HepG2 (cell line): ENCODE measurements at regions of chr17 and their contacts with region 1.

Region 1: DNA sequence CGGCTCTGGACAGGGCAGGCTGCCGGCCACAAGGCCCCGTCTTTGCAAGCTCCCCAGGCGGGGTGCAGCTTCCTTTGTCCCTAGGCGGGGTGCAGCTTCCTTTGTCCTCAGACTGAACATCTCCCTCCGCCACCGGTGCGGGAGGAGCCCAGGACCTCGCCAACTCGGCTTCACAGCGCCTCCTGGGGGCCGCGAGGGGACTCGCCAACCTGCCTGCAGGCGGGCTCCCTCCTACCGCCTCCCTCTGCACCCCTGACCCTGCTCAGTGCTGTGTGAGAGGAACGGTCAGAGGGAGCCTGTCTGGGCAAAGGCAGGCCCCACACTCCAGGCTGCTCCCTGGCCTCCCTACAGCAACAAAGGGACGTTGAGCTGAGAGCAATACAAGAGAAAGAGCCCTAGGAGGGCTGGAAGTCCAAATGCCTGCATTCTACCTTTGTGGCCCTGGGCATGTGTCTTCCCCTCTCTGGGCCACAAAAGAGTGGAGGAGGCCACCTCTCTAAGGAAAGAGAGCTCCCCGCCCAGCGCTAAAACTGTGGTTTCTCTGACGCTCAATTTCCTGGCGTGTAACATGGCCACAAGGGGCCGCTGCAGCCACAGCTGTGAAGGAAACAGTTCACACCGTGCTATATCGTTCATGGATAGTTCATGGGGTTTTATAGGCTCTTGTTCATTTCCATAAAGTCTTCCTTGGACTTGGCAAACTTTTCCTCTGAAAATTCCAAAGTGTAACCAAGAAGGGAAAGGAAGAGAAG is 20.9 kb upstream of the KRT19 start:
- DNase-seq: peak; percentile 82
- ATAC-seq: peak; percentile 90
- H3K4me3 ChIP-seq: peak overlapping the region; percentile 18 to 67 (median 22); a peak in 4 of 6 replicates
- H3K27ac ChIP-seq: peak overlapping the region; percentile 16
- H3K4me1 ChIP-seq: peaks cover 48% of the 10 kb centered on the region
- H3K27me3 ChIP-seq: peaks cover 4 to 28% of the 10 kb centered on the region in 2 experiments; a peak in 4 of 5 replicates
- CTCF ChIP-seq: peak; percentile 89
- EP300 ChIP-seq: no peak
- POLR2A ChIP-seq: no peak
- RAD21 ChIP-seq: peak; percentile 91

Region 2: DNA sequence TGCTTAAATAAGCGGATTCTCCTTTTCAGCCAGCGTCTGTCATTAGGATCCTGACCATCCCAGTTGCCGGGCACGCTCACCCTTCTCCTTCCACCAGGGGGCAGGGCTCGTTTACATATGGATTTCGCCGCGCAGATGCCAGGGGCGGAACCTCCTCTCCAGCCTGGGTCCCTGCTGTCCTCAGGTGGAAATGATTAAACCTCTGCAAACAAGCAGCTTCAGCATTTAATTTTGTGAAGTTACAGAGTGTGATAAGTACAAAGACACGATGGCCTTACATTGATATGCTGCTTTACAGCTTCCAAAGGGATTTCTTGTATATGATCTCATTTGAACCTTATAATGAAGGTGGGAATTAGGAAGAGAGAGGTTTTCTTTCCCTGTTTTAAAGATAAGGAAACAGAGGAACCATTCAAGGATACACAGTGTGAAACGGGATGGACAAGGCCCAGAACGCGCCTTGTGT is 745.4 kb before region 1 on chr17:
- CTCF ChIA-PET with region 1: interaction called, 21 read pairs
- POLR2A ChIA-PET with region 1: no interaction called
- in situ Hi-C with region 1: no loop called
- intact Hi-C with region 1: no loop called
- DNase-seq: peak; percentile 77
- ATAC-seq: peak; percentile 99
- H3K4me3 ChIP-seq: no peak overlapping the region
- H3K27ac ChIP-seq: no peak overlapping the region
- H3K4me1 ChIP-seq: peaks cover 6% of the 10 kb centered on the region
- H3K27me3 ChIP-seq: peaks cover 0 to 11% of the 10 kb centered on the region in 2 experiments; a peak in 3 of 5 replicates
- CTCF ChIP-seq: peak; percentile 97
- EP300 ChIP-seq: no peak
- POLR2A ChIP-seq: no peak
- RAD21 ChIP-seq: peak; percentile 92

Region 3: GRCh38 chr17:40854159-40854814 is 694.7 kb before region 1 on chr17:
- CTCF ChIA-PET with region 1: interaction called, 11 read pairs
- POLR2A ChIA-PET with region 1: no interaction called
- in situ Hi-C with region 1: no loop called
- intact Hi-C with region 1: no loop called
- DNase-seq: peak; percentile 55
- ATAC-seq: peak; percentile 46; the same call in 1 of the 3 replicates
- H3K4me3 ChIP-seq: no peak overlapping the region
- H3K27ac ChIP-seq: no peak overlapping the region
- H3K4me1 ChIP-seq: peaks cover 10% of the 10 kb centered on the region; the same call in 1 of the 2 replicates
- H3K27me3 ChIP-seq: 0 out of 5 replicates have a peak, but pooled peaks cover 0 to 3% of the 10 kb centered on the region in 2 experiments
- CTCF ChIP-seq: no peak
- EP300 ChIP-seq: peak in 1 of 2 experiments; percentile 66; a peak in 2 of 4 replicates
- POLR2A ChIP-seq: no peak
- RAD21 ChIP-seq: no peak

Region 4: DNA sequence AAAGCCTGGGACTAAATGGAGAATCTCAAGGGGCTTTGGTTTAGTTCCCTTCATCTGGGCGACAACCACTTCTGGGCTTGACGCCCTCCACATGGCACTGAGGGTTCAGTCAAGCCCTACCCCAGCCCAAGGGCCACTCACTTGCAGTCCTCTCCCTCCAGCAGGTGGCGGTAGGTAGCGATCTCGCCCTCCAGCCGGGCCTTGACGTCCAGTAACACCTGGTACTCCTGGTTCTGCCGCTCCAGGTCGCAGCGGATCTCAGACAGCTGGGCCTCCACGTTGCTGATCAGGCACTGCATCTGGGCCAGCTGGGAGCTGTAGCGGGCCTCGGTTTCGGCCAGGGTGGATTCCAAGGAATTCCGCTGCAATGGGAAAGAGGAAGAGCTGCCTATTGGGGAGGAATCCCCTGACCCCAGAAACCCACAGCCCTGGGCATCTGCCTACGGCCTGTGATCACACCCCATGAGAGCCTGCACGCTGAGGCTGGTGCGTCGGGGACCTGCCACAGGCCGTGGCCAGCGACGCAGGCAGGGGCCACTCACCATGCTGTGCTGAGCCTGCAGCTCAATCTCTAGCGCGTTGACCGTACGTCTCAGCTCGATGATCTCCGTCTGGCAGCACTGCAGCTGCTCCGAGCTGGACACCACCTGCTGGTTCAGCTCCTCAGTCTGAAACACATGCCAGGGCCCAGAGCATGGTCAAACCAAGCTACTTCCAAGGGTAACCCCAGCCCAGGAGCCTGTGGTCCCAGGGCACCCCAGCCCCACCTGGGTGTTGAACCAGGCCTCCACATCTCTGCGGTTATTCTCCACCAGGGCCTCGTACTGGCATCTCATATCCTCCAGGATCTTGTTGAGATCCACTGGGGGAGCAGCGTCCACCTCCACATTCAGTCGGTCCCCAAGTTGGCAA is 62.0 kb before region 1 on chr17:
- CTCF ChIA-PET with region 1: interaction called, 39 read pairs
- POLR2A ChIA-PET with region 1: no interaction called
- in situ Hi-C with region 1: loop called (anchors 5 kb)
- intact Hi-C with region 1: no loop called
- DNase-seq: peak; percentile 42
- ATAC-seq: peak; percentile 87
- H3K4me3 ChIP-seq: no peak overlapping the region
- H3K27ac ChIP-seq: no peak overlapping the region
- H3K4me1 ChIP-seq: no peaks in the 10 kb centered on the region
- H3K27me3 ChIP-seq: peaks cover 1 to 45% of the 10 kb centered on the region in 2 experiments; a peak in 4 of 5 replicates
- CTCF ChIP-seq: peak; percentile 80
- EP300 ChIP-seq: no peak
- POLR2A ChIP-seq: no peak
- RAD21 ChIP-seq: peak; percentile 78

Region 5: GRCh38 chr17:41530062-41531051 is 18.7 kb before region 1 on chr17:
- CTCF ChIA-PET with region 1: interaction called, 5 read pairs
- POLR2A ChIA-PET with region 1: interaction called, 26 read pairs
- in situ Hi-C with region 1: no loop called
- intact Hi-C with region 1: no loop called
- DNase-seq: peak; percentile 85
- ATAC-seq: peak; percentile 53
- H3K4me3 ChIP-seq: peak overlapping the region in 1 of 3 experiments; percentile 84; a peak in 1 of 6 replicates
- H3K27ac ChIP-seq: peak overlapping the region; percentile 7
- H3K4me1 ChIP-seq: peaks cover 56% of the 10 kb centered on the region
- H3K27me3 ChIP-seq: peaks cover 0 to 3% of the 10 kb centered on the region in 2 experiments; a peak in 1 of 5 replicates
- CTCF ChIP-seq: no peak
- EP300 ChIP-seq: peak in 1 of 2 experiments; percentile 35; a peak in 1 of 4 replicates
- POLR2A ChIP-seq: peak in 1 of 2 experiments; percentile 36; a peak in 1 of 4 replicates
- RAD21 ChIP-seq: no peak

Region 6: GRCh38 chr17:41648411-41649195 is 99.6 kb after region 1 on chr17:
- CTCF ChIA-PET with region 1: interaction called, 67 read pairs
- POLR2A ChIA-PET with region 1: interaction called, 5 read pairs
- in situ Hi-C with region 1: no loop called
- intact Hi-C with region 1: loop called (anchors 1 kb)
- DNase-seq: peak; percentile 75
- ATAC-seq: peak; percentile 89
- H3K4me3 ChIP-seq: peak overlapping the region; percentile 4 to 66 (median 37); a peak in 3 of 6 replicates
- H3K27ac ChIP-seq: no peak overlapping the region
- H3K4me1 ChIP-seq: peaks cover 33% of the 10 kb centered on the region
- H3K27me3 ChIP-seq: peaks cover 5 to 20% of the 10 kb centered on the region in 2 experiments; a peak in 3 of 5 replicates
- CTCF ChIP-seq: peak; percentile 98
- EP300 ChIP-seq: no peak
- POLR2A ChIP-seq: no peak
- RAD21 ChIP-seq: peak; percentile 83